ENCODE measurements at regions of chr6 and their contacts with region 1.

Region 1: GRCh38 chr6:127855542-127856159 is 45.2 kb downstream of the THEMIS start:
- DNase-seq: peak; percentile 79
- H3K4me3 Mint-ChIP-seq: peak overlapping the region; percentile 54
- H3K27ac Mint-ChIP-seq: peak overlapping the region; percentile 59
- H3K4me1 Mint-ChIP-seq: peaks cover 73% of the 10 kb centered on the region
- H3K27me3 Mint-ChIP-seq: no peaks in the 10 kb centered on the region

Region 2: GRCh38 chr6:127342946-127343808 is 512.5 kb before region 1 on chr6 and contains the start of gene ECHDC1:
- CTCF ChIA-PET with region 1: no interaction called
- intact Hi-C with region 1: no loop called
- DNase-seq: peak; percentile 81
- H3K4me3 Mint-ChIP-seq: no peak within 1 kb of the TSS
- H3K27ac Mint-ChIP-seq: no peak within 1 kb of the TSS
- H3K4me1 Mint-ChIP-seq: peaks cover 13% of the 10 kb centered on the region
- H3K27me3 Mint-ChIP-seq: no peaks in the 10 kb centered on the region
- total RNA-seq, gene ECHDC1: 40.1 to 41.4 TPM

Region 3: DNA sequence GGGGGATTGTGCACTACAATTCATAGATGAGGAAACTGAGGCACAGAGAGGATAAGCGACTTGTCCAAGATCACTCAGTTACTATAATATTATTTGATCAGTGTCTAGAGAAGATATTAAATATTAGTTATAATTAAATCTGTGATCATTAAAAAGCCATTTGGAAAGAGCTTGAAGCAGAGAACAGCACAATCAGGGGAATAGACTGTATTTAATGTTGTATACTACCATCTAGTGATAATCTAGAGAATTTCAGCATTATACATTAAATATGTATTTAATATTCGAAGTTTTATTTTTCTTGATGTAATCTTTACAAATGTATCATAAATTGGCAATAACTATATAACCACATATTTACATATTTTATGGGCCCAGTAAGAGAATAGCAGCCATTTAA is 316.4 kb before region 1 on chr6:
- CTCF ChIA-PET with region 1: no interaction called
- intact Hi-C with region 1: no loop called
- DNase-seq: no peak
- H3K4me3 Mint-ChIP-seq: no peak overlapping the region
- H3K27ac Mint-ChIP-seq: no peak overlapping the region
- H3K4me1 Mint-ChIP-seq: no peaks in the 10 kb centered on the region
- H3K27me3 Mint-ChIP-seq: peaks cover 13% of the 10 kb centered on the region

Region 4: GRCh38 chr6:127869772-127870404 is 14.2 kb after region 1 on chr6:
- CTCF ChIA-PET with region 1: interaction called, 38 read pairs
- intact Hi-C with region 1: loop called (anchors 1 kb)
- DNase-seq: no peak
- H3K4me3 Mint-ChIP-seq: peak overlapping the region; percentile 63
- H3K27ac Mint-ChIP-seq: peak overlapping the region; percentile 32
- H3K4me1 Mint-ChIP-seq: peaks cover 47% of the 10 kb centered on the region
- H3K27me3 Mint-ChIP-seq: no peaks in the 10 kb centered on the region

Region 5: GRCh38 chr6:127971945-127972391 is 116.3 kb after region 1 on chr6:
- CTCF ChIA-PET with region 1: interaction called, 14 read pairs
- intact Hi-C with region 1: loop called (anchors 1 kb)
- DNase-seq: peak; percentile 62
- H3K4me3 Mint-ChIP-seq: peak overlapping the region; percentile 72
- H3K27ac Mint-ChIP-seq: peak overlapping the region; percentile 88
- H3K4me1 Mint-ChIP-seq: peaks cover 63% of the 10 kb centered on the region
- H3K27me3 Mint-ChIP-seq: no peaks in the 10 kb centered on the region

Region 6: GRCh38 chr6:128259730-128260685 is 404.4 kb after region 1 on chr6:
- CTCF ChIA-PET with region 1: no interaction called
- intact Hi-C with region 1: loop called (anchors 1 kb)
- DNase-seq: no peak
- H3K4me3 Mint-ChIP-seq: peak overlapping the region; percentile 60
- H3K27ac Mint-ChIP-seq: peak overlapping the region; percentile 46
- H3K4me1 Mint-ChIP-seq: peaks cover 22% of the 10 kb centered on the region
- H3K27me3 Mint-ChIP-seq: no peaks in the 10 kb centered on the region

Region 7: GRCh38 chr6:128655978-128656498 is 800.4 kb after region 1 on chr6:
- CTCF ChIA-PET with region 1: no interaction called
- intact Hi-C with region 1: loop called (anchors 2 kb)
- DNase-seq: peak; percentile 50
- H3K4me3 Mint-ChIP-seq: no peak overlapping the region
- H3K27ac Mint-ChIP-seq: peak overlapping the region; percentile 69
- H3K4me1 Mint-ChIP-seq: peaks cover 31% of the 10 kb centered on the region
- H3K27me3 Mint-ChIP-seq: peaks cover under 1% of the 10 kb centered on the region

Region 8: GRCh38 chr6:129567374-129567773 is 1711.7 kb after region 1 on chr6:
- CTCF ChIA-PET with region 1: no interaction called
- intact Hi-C with region 1: loop called (anchors 10 kb)
- DNase-seq: peak; percentile 79
- H3K4me3 Mint-ChIP-seq: no peak overlapping the region
- H3K27ac Mint-ChIP-seq: no peak overlapping the region
- H3K4me1 Mint-ChIP-seq: peaks cover 3% of the 10 kb centered on the region
- H3K27me3 Mint-ChIP-seq: no peaks in the 10 kb centered on the region

Measured in activated naive CD4-positive, alpha-beta T cell treated with anti-CD3 and anti-CD28 coated beads for 36 hours (primary cell).